GM12878 (cell line): ENCODE measurements at regions of chr3 and their contacts with region 1.

Region 1: DNA sequence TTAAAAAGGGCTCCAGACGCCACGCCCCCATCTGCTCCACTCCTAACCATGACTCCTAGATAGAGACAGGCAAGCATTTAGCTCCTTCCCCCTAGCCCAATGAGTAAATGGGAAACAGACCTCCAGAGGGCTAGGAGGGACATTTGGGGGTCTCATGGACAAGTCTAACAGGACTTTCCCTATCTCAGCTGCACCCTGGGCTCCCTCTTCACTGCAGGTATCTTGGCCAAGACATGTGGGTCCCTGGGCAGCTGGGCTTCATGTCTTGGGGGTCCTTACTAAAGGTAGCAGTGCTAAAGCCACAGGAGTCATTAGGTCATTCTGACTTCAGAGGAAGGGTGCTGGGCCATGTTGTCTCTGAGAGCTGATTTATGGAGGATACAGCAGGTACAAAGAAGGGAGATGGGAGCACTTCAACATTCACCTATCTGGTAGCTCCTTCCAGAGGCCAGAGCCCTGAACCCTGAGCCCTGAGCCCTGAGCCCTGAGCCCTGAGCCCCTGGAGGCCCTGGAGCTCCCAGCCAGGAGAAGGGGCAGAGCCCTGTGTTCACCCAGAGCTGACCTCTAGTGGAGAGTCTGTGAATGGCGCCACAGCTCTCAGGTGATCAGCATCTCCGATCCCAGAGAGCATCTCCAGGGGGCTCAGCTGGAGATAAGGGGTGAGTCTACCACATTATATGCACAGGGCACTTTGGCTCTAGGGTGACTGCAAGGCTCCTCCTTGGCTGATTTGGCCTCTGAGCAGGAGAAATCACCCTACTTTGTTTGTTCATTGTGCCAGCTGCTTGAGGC is 40.1 kb upstream of the EPHB1 start:
- DNase-seq: no peak
- ATAC-seq: peak; percentile 99
- H3K4me3 ChIP-seq: no peak overlapping the region
- H3K27ac ChIP-seq: no peak overlapping the region
- H3K4me1 ChIP-seq: no peaks in the 10 kb centered on the region
- H3K27me3 ChIP-seq: no peaks in the 10 kb centered on the region; a peak in 1 of 4 replicates
- CTCF ChIP-seq: peak; percentile 63 to 94 (median 82)
- EP300 ChIP-seq: no peak
- POLR2A ChIP-seq: no peak
- RAD21 ChIP-seq: peak; percentile 41; the same call in 1 of the 2 replicates

Region 2: DNA sequence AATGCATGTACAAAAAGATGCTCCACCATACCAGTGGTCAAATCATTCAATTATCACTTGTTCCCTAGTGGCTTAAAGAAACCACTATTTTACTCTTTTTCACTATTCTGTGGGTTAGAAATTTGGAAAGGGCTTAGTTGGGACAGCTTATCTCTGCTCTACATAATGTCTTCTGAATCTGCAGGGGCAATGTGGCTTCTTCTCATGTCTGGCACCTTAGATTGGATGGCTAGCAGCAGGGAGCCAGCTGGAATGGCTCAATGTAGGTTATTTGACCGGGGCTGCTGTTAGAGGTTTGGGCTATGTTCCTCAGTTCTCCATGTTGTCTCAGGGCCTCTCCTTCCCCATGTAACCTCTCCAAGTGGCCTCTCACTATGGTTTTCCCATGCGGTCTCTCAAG is 17.4 kb before region 1 on chr3:
- CTCF ChIA-PET with region 1: interaction called, 10 read pairs
- POLR2A ChIA-PET with region 1: no interaction called
- RAD21 ChIA-PET with region 1: no interaction called
- SMC1A ChIA-PET with region 1: no interaction called
- in situ Hi-C with region 1: no loop called
- intact Hi-C with region 1: no loop called
- DNase-seq: no peak
- ATAC-seq: no peak
- H3K4me3 ChIP-seq: no peak overlapping the region
- H3K27ac ChIP-seq: no peak overlapping the region
- H3K4me1 ChIP-seq: no peaks in the 10 kb centered on the region
- H3K27me3 ChIP-seq: peaks cover 0 to 3% of the 10 kb centered on the region in 2 experiments; a peak in 3 of 4 replicates
- CTCF ChIP-seq: no peak
- EP300 ChIP-seq: no peak
- POLR2A ChIP-seq: no peak
- RAD21 ChIP-seq: no peak

Region 3: GRCh38 chr3:134769287-134769868 is 14.4 kb after region 1 on chr3:
- CTCF ChIA-PET with region 1: interaction called, 11 read pairs
- POLR2A ChIA-PET with region 1: no interaction called
- RAD21 ChIA-PET with region 1: no interaction called
- SMC1A ChIA-PET with region 1: no interaction called
- in situ Hi-C with region 1: no loop called
- intact Hi-C with region 1: no loop called
- DNase-seq: no peak
- ATAC-seq: no peak
- H3K4me3 ChIP-seq: no peak overlapping the region
- H3K27ac ChIP-seq: no peak overlapping the region
- H3K4me1 ChIP-seq: no peaks in the 10 kb centered on the region
- H3K27me3 ChIP-seq: no peaks in the 10 kb centered on the region
- CTCF ChIP-seq: no peak
- EP300 ChIP-seq: no peak
- POLR2A ChIP-seq: no peak
- RAD21 ChIP-seq: no peak

Region 4: GRCh38 chr3:135503760-135504686 is 749.1 kb after region 1 on chr3:
- CTCF ChIA-PET with region 1: interaction called, 17 read pairs
- POLR2A ChIA-PET with region 1: no interaction called
- RAD21 ChIA-PET with region 1: interaction called, 4 read pairs
- SMC1A ChIA-PET with region 1: interaction called, 4 read pairs
- in situ Hi-C with region 1: no loop called
- intact Hi-C with region 1: no loop called
- DNase-seq: peak; percentile 13
- ATAC-seq: peak; percentile 99
- H3K4me3 ChIP-seq: no peak overlapping the region
- H3K27ac ChIP-seq: no peak overlapping the region
- H3K4me1 ChIP-seq: no peaks in the 10 kb centered on the region
- H3K27me3 ChIP-seq: no peaks in the 10 kb centered on the region; a peak in 1 of 4 replicates
- CTCF ChIP-seq: peak; percentile 76 to 81 (median 80)
- EP300 ChIP-seq: no peak
- POLR2A ChIP-seq: no peak
- RAD21 ChIP-seq: peak; percentile 79